Gastrocnemius medialis (tissue), 4 donors: ENCODE measurements at regions of chr21 and their contacts with region 1.

Region 1: DNA sequence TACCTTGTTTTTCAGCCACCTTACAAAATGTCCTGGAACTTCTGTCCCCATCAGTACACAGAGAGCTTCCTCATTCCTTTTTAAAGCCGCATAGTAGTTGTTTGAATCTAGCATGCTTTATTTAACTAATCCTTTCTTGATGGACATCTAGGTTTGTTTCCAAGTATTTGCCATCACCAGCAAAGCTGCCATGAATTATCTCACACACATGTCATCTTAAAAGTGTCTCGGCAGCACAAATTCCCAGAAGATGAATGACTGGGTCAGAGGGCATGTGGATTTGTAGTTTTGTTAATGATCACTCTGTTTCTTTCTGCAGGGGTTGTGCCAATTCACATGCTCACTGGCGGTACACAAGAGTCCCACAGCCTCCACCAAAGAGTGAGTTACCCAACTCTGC is 68.3 kb downstream of the CLIC6 start:
- DNase-seq: peak in 1 of 2 donors; percentile 9
- ATAC-seq: peak in 1 of 2 donors; percentile 57
- H3K4me3 ChIP-seq: no peak overlapping the region
- H3K27ac ChIP-seq: peak overlapping the region; percentile 42 to 90 (median 78)
- H3K4me1 ChIP-seq: peaks cover 23 to 41% of the 10 kb centered on the region in 2 donors
- H3K27me3 ChIP-seq: no peaks in the 10 kb centered on the region
- CTCF ChIP-seq: no peak
- POLR2A ChIP-seq: no peak

Region 2: GRCh38 chr21:34362136-34362444 is 375.0 kb before region 1 on chr21:
- in situ Hi-C with region 1: no loop called
- intact Hi-C with region 1: no loop called
- DNase-seq: no peak
- ATAC-seq: peak; percentile 21 to 27
- H3K4me3 ChIP-seq: no peak overlapping the region
- H3K27ac ChIP-seq: no peak overlapping the region
- H3K4me1 ChIP-seq: peaks cover 0 to 7% of the 10 kb centered on the region in 2 donors
- H3K27me3 ChIP-seq: no peaks in the 10 kb centered on the region
- CTCF ChIP-seq: peak in 2 of 5 experiments; percentile 7 to 9
- POLR2A ChIP-seq: no peak

Region 3: DNA sequence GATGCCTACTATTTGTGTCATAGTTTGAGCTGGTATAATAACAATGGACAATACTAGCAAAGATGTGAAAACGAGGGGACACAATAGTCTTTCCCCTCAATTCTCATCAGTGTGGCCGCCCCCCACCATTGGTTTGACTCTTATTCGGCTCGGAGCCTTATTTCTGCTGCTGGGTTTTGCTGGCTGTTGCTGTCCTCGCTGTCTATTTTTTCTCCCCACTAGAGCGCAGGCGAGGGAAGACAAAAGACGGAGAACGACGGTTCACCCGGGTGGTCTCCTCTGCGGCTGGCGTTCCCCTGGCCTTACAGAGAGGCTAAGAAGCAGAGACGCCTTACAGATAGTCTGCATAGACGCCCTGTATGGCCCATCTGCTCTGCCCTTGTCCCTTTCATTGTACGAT is 49.0 kb before region 1 on chr21:
- in situ Hi-C with region 1: no loop called
- intact Hi-C with region 1: loop called (anchors 2 kb)
- DNase-seq: no peak
- ATAC-seq: no peak
- H3K4me3 ChIP-seq: no peak overlapping the region
- H3K27ac ChIP-seq: peak overlapping the region in 1 of 4 donors; percentile 71
- H3K4me1 ChIP-seq: peaks cover 14 to 33% of the 10 kb centered on the region in 2 donors
- H3K27me3 ChIP-seq: no peaks in the 10 kb centered on the region
- CTCF ChIP-seq: no peak
- POLR2A ChIP-seq: no peak

Region 4: GRCh38 chr21:35189077-35189863 is 452.2 kb after region 1 on chr21:
- in situ Hi-C with region 1: no loop called
- intact Hi-C with region 1: loop called (anchors 5 kb)
- DNase-seq: no peak
- ATAC-seq: no peak
- H3K4me3 ChIP-seq: peak overlapping the region in 1 of 4 donors; percentile 15
- H3K27ac ChIP-seq: peak overlapping the region; percentile 76 to 87 (median 81)
- H3K4me1 ChIP-seq: peaks cover 22 to 25% of the 10 kb centered on the region in 2 donors
- H3K27me3 ChIP-seq: no peaks in the 10 kb centered on the region
- CTCF ChIP-seq: no peak
- POLR2A ChIP-seq: no peak

Region 5: GRCh38 chr21:35226948-35227744 is 490.0 kb after region 1 on chr21:
- in situ Hi-C with region 1: loop called in 1 of 4 experiments (anchors 10 kb)
- intact Hi-C with region 1: no loop called
- DNase-seq: no peak
- ATAC-seq: peak; percentile 24 to 27
- H3K4me3 ChIP-seq: no peak overlapping the region
- H3K27ac ChIP-seq: peak overlapping the region; percentile 85 to 93 (median 90)
- H3K4me1 ChIP-seq: peaks cover 53 to 68% of the 10 kb centered on the region in 2 donors
- H3K27me3 ChIP-seq: no peaks in the 10 kb centered on the region
- CTCF ChIP-seq: no peak
- POLR2A ChIP-seq: no peak

Region 6: DNA sequence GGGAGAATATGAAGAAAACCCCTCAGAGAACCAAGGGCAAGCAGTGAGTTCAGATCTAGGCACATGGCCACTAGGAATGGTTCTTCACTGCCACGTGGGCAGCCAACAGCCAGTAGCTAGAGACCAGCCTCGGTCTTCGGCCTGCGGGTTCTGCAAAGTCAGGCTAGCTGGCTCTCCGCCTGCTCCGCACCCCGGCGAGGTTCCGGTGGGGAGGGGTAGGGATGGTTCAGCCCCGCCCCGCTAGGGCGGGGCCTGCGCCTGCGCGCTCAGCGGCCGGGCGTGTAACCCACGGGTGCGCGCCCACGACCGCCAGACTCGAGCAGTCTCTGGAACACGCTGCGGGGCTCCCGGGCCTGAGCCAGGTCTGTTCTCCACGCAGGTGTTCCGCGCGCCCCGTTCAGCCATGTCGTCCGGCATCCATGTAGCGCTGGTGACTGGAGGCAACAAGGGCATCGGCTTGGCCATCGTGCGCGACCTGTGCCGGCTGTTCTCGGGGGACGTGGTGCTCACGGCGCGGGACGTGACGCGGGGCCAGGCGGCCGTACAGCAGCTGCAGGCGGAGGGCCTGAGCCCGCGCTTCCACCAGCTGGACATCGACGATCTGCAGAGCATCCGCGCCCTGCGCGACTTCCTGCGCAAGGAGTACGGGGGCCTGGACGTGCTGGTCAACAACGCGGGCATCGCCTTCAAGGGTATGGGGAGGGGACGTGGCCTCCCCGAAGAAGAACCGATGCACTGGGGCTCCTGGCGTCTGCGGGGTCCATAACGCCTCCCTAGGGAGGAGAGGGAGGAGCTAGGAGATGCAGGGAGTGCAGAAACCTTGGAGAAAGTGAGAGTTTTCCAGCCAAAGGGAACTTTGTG is 1332.8 kb after region 1 on chr21 and contains the start of gene CBR1:
- in situ Hi-C with region 1: no loop called
- intact Hi-C with region 1: no loop called
- DNase-seq: peak; percentile 87 to 95
- ATAC-seq: peak; percentile 93 to 95
- H3K4me3 ChIP-seq: peak within 1 kb of the TSS; percentile 82 to 94 (median 92)
- H3K27ac ChIP-seq: peak within 1 kb of the TSS; percentile 75 to 90 (median 79)
- H3K4me1 ChIP-seq: peaks cover 39% of the 10 kb centered on the region in 2 donors
- H3K27me3 ChIP-seq: no peaks in the 10 kb centered on the region
- CTCF ChIP-seq: peak in 1 of 5 experiments; percentile 24
- POLR2A ChIP-seq: peak; percentile 59 to 66
- total RNA-seq, gene CBR1: 44.8 to 73.9 (median 66.4) TPM